ENCODE measurements at regions of chr3 and their contacts with region 1.

Region 1: GRCh38 chr3:120558771-120559241 is 37.3 kb upstream of the NDUFB4 start:
- DNase-seq: peak; percentile 95
- ATAC-seq: peak; percentile 60
- H3K4me3 ChIP-seq: peak overlapping the region; percentile 74
- H3K27ac ChIP-seq: peak overlapping the region; percentile 64
- H3K4me1 ChIP-seq: peaks cover 33% of the 10 kb centered on the region
- H3K27me3 ChIP-seq: no peaks in the 10 kb centered on the region
- CTCF ChIP-seq: peak; percentile 94

Region 2: DNA sequence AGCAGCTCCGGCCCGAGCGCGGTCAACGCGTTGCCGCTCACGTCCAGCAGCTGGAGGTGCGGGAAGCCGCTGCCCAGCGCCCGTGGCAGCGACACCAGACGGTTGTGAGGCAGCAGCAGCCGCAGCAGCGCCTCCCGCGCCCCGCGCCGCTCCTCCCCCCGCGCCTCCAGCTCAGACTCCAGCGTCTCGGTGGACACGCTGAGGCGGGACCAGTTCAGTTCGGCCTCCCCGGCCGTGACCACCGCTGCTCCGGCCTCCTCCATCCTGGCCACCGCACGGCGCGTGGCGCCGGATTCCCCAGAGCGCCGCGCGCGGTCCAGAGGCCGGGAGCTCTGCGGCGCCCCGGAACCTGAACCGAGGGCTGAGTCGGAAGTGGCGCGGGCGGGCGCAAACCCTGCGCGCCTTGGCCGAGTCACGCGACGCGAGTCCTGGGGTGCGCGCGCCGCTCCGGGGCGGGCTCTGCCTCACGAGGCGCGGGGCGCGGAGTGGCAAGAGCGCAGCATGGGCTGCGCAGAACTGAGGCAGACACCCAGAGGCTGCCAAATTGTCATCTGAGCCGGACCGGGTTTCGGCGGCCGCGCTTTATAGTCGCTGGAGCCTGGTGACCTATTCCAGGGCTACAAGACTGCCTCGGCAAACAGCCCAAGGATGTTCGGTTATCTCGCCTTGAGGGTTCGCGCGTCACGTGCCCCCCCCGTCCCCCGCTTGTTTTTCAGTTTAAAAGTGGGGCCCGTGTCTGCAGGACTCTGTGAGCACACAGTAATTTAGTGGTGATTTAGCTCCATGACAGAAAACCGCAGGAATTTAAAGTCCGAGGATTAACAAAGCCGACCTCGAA is 209.6 kb before region 1 on chr3 and contains the start of gene LRRC58:
- CTCF ChIA-PET with region 1: interaction called, 3 read pairs
- POLR2A ChIA-PET with region 1: no interaction called
- intact Hi-C with region 1: loop called (anchors 2 kb)
- DNase-seq: peak; percentile 99
- ATAC-seq: peak; percentile 91
- H3K4me3 ChIP-seq: peak within 1 kb of the TSS; percentile 74
- H3K27ac ChIP-seq: peak within 1 kb of the TSS; percentile 51
- H3K4me1 ChIP-seq: peaks cover 41% of the 10 kb centered on the region
- H3K27me3 ChIP-seq: no peaks in the 10 kb centered on the region
- CTCF ChIP-seq: peak; percentile 52
- total RNA-seq, gene LRRC58: 33.7 and 35.2 TPM in 2 replicates

Region 3: DNA sequence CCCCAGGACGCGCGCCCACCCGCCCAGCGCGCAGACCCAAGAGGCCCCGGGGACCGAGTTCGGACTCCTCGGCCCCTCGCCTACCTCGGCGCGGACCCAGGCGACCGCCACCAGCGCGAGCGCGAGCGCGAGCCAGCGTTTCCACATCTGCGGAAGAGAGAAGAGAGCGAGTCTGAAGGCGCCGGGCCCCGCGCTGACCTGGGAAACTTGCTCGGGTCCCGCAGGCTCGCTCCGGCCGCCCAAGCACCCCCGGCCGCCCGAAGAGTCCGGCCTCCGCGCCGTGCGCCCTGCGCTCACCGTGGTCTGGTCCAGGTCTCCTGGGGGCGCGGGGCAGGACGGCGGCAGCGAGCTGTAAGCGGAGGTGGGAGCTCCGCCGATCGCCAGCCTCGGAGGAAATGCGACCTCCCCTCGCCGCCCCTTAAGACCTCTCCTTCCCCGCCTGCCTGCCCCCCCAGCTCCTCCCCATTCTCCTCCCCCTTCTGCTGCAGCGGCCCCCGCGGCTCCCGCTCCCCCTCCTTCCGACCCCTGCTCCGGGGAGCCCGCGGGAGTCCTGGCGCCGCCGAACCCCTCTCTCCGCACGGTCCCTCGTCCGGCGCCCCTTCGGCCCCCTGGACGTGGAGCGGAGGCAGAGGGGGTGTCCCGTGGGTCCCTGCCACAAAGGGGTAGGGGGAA is 108.1 kb before region 1 on chr3 and contains the start of gene FSTL1:
- CTCF ChIA-PET with region 1: interaction called, 3 read pairs
- POLR2A ChIA-PET with region 1: no interaction called
- intact Hi-C with region 1: loop called (anchors 1 kb)
- DNase-seq: peak; percentile 45
- ATAC-seq: peak; percentile 49
- H3K4me3 ChIP-seq: peak within 1 kb of the TSS; percentile 81
- H3K27ac ChIP-seq: peak within 1 kb of the TSS; percentile 25
- H3K4me1 ChIP-seq: peaks cover 38% of the 10 kb centered on the region
- H3K27me3 ChIP-seq: no peaks in the 10 kb centered on the region
- CTCF ChIP-seq: no peak
- total RNA-seq, gene FSTL1: 178 and 185 TPM in 2 replicates

Region 4: GRCh38 chr3:120596116-120596852 is 37.5 kb after region 1 on chr3 and contains the start of gene NDUFB4:
- CTCF ChIA-PET with region 1: interaction called, 4 read pairs
- POLR2A ChIA-PET with region 1: no interaction called
- intact Hi-C with region 1: loop called (anchors 2 kb)
- DNase-seq: peak; percentile 100
- ATAC-seq: peak; percentile 98
- H3K4me3 ChIP-seq: peak within 1 kb of the TSS; percentile 93
- H3K27ac ChIP-seq: peak within 1 kb of the TSS; percentile 68
- H3K4me1 ChIP-seq: peaks cover 19% of the 10 kb centered on the region
- H3K27me3 ChIP-seq: no peaks in the 10 kb centered on the region
- CTCF ChIP-seq: no peak
- total RNA-seq, gene NDUFB4: 239 and 283 TPM in 2 replicates

Region 5: GRCh38 chr3:120894303-120894702 is 335.5 kb after region 1 on chr3:
- CTCF ChIA-PET with region 1: no interaction called
- POLR2A ChIA-PET with region 1: no interaction called
- intact Hi-C with region 1: loop called (anchors 10 kb)
- DNase-seq: peak; percentile 77
- ATAC-seq: peak; percentile 94
- H3K4me3 ChIP-seq: peak overlapping the region; percentile 29; the same call in 1 of the 2 replicates
- H3K27ac ChIP-seq: peak overlapping the region; percentile 15; the same call in 1 of the 2 replicates
- H3K4me1 ChIP-seq: peaks cover 17% of the 10 kb centered on the region
- H3K27me3 ChIP-seq: peaks cover 12% of the 10 kb centered on the region; the same call in 1 of the 2 replicates
- CTCF ChIP-seq: no peak

Region 6: DNA sequence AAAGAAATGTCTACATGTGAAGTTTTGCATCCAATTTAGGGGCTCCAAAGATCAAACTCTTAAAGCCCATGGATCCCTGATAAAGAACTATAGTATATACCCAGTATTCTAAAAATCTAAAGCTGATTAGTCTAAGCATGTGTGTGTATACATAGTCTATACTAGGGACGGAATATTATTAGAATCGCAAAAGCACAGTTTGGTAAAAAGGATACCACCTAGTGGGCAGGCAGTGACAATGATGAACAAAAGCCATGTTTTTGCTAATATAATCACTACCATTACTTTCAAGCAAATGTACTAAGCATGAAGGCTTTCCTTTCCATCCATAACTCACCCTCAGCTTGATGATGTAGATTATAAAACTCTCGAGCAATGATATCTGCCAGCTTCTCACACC is 970.5 kb after region 1 on chr3:
- CTCF ChIA-PET with region 1: no interaction called
- POLR2A ChIA-PET with region 1: no interaction called
- intact Hi-C with region 1: loop called (anchors 2 kb)
- DNase-seq: peak; percentile 23
- ATAC-seq: peak; percentile 57
- H3K4me3 ChIP-seq: no peak overlapping the region
- H3K27ac ChIP-seq: no peak overlapping the region
- H3K4me1 ChIP-seq: no peaks in the 10 kb centered on the region
- H3K27me3 ChIP-seq: no peaks in the 10 kb centered on the region
- CTCF ChIP-seq: peak; percentile 66

Measured in PC-3 (cell line).